Naive thymus-derived CD4-positive, alpha-beta T cell (primary cell): ENCODE measurements at regions of chr12 and their contacts with region 1.

Region 1: GRCh38 chr12:51238510-51239334 is at the start of gene DAZAP2:
- DNase-seq: peak; percentile 82 to 94 (median 92)
- ATAC-seq: peak; percentile 93
- H3K4me3 ChIP-seq: peak within 1 kb of the TSS; percentile 98
- H3K4me3 Mint-ChIP-seq: peak within 1 kb of the TSS; percentile 91 to 99 (median 97)
- H3K27ac ChIP-seq: peak within 1 kb of the TSS; percentile 100
- H3K27ac Mint-ChIP-seq: peak within 1 kb of the TSS; percentile 97 to 100 (median 100)
- H3K4me1 ChIP-seq: peaks cover 24 to 29% of the 10 kb centered on the region in 2 donors
- H3K4me1 Mint-ChIP-seq: peaks cover 36 to 50% (median 42%) of the 10 kb centered on the region in 7 donors
- H3K27me3 ChIP-seq: no peaks in the 10 kb centered on the region
- H3K27me3 Mint-ChIP-seq: peaks cover 0 to 4% (median 0%) of the 10 kb centered on the region in 5 donors
- total RNA-seq, gene DAZAP2: 231 to 306 (median 271) TPM

Region 2: GRCh38 chr12:50401365-50402081 is 837.2 kb before region 1 on chr12:
- CTCF ChIA-PET with region 1: no interaction called
- POLR2A ChIA-PET with region 1: no interaction called
- intact Hi-C with region 1: no loop called
- DNase-seq: peak in 2 of 9 donors; percentile 0 to 1
- ATAC-seq: no peak
- H3K4me3 ChIP-seq: peak overlapping the region; percentile 66
- H3K4me3 Mint-ChIP-seq: peak overlapping the region; percentile 81 to 100 (median 99)
- H3K27ac ChIP-seq: peak overlapping the region; percentile 77
- H3K27ac Mint-ChIP-seq: peak overlapping the region; percentile 86 to 97 (median 95)
- H3K4me1 ChIP-seq: peaks cover 9 to 12% of the 10 kb centered on the region in 2 donors
- H3K4me1 Mint-ChIP-seq: peaks cover 23 to 55% (median 37%) of the 10 kb centered on the region in 7 donors
- H3K27me3 ChIP-seq: no peaks in the 10 kb centered on the region
- H3K27me3 Mint-ChIP-seq: peaks cover 0 to 10% (median 1%) of the 10 kb centered on the region in 5 donors

Region 3: DNA sequence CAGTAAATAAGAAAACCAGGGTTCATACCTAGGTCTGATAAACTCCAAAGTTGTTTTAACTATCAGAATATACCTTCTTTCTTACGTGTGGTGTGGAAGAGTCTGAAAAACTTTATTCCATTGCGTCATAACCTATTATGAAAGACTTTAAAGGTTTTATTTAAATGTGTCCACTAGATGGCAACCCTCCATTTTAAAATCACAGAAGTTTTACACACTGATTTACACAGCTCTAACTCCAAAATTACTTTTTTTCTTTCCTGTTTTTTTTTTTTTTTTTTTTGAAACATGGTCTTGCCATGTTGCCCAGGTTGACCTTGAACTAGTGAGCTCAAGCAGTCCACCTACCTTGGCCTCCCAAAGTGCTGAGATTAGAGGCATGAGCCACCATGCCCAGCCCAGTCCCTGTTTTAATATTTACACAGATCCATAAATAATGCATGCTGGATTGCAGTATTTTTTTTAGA is 413.3 kb before region 1 on chr12:
- CTCF ChIA-PET with region 1: no interaction called
- POLR2A ChIA-PET with region 1: no interaction called
- intact Hi-C with region 1: loop called in 1 of 2 experiments (anchors 2 kb)
- DNase-seq: peak in 7 of 9 donors; percentile 45 to 76 (median 69)
- ATAC-seq: peak; percentile 91
- H3K4me3 ChIP-seq: no peak overlapping the region
- H3K4me3 Mint-ChIP-seq: peak overlapping the region in 2 of 10 donors; percentile 34 to 77
- H3K27ac ChIP-seq: peak overlapping the region; percentile 73
- H3K27ac Mint-ChIP-seq: peak overlapping the region; percentile 56 to 99 (median 91)
- H3K4me1 ChIP-seq: peaks cover 0 to 4% of the 10 kb centered on the region in 2 donors
- H3K4me1 Mint-ChIP-seq: peaks cover 0 to 9% (median 6%) of the 10 kb centered on the region in 7 donors
- H3K27me3 ChIP-seq: no peaks in the 10 kb centered on the region
- H3K27me3 Mint-ChIP-seq: no peaks in the 10 kb centered on the region

Region 4: GRCh38 chr12:50862316-50862715 is 376.4 kb before region 1 on chr12:
- CTCF ChIA-PET with region 1: no interaction called
- POLR2A ChIA-PET with region 1: no interaction called
- intact Hi-C with region 1: no loop called
- DNase-seq: no peak
- ATAC-seq: no peak
- H3K4me3 ChIP-seq: no peak overlapping the region
- H3K4me3 Mint-ChIP-seq: no peak overlapping the region
- H3K27ac ChIP-seq: no peak overlapping the region
- H3K27ac Mint-ChIP-seq: no peak overlapping the region
- H3K4me1 ChIP-seq: peaks cover 0 to 5% of the 10 kb centered on the region in 2 donors
- H3K4me1 Mint-ChIP-seq: peaks cover 8 to 22% (median 17%) of the 10 kb centered on the region in 7 donors
- H3K27me3 ChIP-seq: no peaks in the 10 kb centered on the region
- H3K27me3 Mint-ChIP-seq: no peaks in the 10 kb centered on the region

Region 5: GRCh38 chr12:51083126-51083833 is 155.4 kb before region 1 on chr12 and contains the start of gene CSRNP2:
- CTCF ChIA-PET with region 1: no interaction called
- POLR2A ChIA-PET with region 1: interaction called, 29 read pairs
- intact Hi-C with region 1: loop called (anchors 1 kb)
- DNase-seq: peak; percentile 90 to 95 (median 94)
- ATAC-seq: peak; percentile 100
- H3K4me3 ChIP-seq: peak within 1 kb of the TSS; percentile 78
- H3K4me3 Mint-ChIP-seq: peak within 1 kb of the TSS; percentile 89 to 100 (median 96)
- H3K27ac ChIP-seq: peak within 1 kb of the TSS; percentile 97
- H3K27ac Mint-ChIP-seq: peak within 1 kb of the TSS; percentile 89 to 98 (median 93)
- H3K4me1 ChIP-seq: peaks cover 7% of the 10 kb centered on the region in 2 donors
- H3K4me1 Mint-ChIP-seq: peaks cover 22 to 46% (median 43%) of the 10 kb centered on the region in 7 donors
- H3K27me3 ChIP-seq: no peaks in the 10 kb centered on the region
- H3K27me3 Mint-ChIP-seq: no peaks in the 10 kb centered on the region
- total RNA-seq, gene CSRNP2: 20.0 to 38.7 (median 23.4) TPM

Region 6: GRCh38 chr12:51202718-51203117 is 36.0 kb before region 1 on chr12:
- CTCF ChIA-PET with region 1: no interaction called
- POLR2A ChIA-PET with region 1: interaction called, 4 read pairs
- intact Hi-C with region 1: loop called in 1 of 2 experiments (anchors 5 kb)
- DNase-seq: peak in 7 of 9 donors; percentile 28 to 67 (median 36)
- ATAC-seq: peak; percentile 66
- H3K4me3 ChIP-seq: no peak overlapping the region
- H3K4me3 Mint-ChIP-seq: peak overlapping the region in 8 of 10 donors; percentile 20 to 54 (median 29)
- H3K27ac ChIP-seq: peak overlapping the region; percentile 37
- H3K27ac Mint-ChIP-seq: peak overlapping the region; percentile 14 to 94 (median 88)
- H3K4me1 ChIP-seq: peaks cover 0 to 12% of the 10 kb centered on the region in 2 donors
- H3K4me1 Mint-ChIP-seq: peaks cover 0 to 36% (median 13%) of the 10 kb centered on the region in 7 donors
- H3K27me3 ChIP-seq: no peaks in the 10 kb centered on the region
- H3K27me3 Mint-ChIP-seq: no peaks in the 10 kb centered on the region

Region 7: DNA sequence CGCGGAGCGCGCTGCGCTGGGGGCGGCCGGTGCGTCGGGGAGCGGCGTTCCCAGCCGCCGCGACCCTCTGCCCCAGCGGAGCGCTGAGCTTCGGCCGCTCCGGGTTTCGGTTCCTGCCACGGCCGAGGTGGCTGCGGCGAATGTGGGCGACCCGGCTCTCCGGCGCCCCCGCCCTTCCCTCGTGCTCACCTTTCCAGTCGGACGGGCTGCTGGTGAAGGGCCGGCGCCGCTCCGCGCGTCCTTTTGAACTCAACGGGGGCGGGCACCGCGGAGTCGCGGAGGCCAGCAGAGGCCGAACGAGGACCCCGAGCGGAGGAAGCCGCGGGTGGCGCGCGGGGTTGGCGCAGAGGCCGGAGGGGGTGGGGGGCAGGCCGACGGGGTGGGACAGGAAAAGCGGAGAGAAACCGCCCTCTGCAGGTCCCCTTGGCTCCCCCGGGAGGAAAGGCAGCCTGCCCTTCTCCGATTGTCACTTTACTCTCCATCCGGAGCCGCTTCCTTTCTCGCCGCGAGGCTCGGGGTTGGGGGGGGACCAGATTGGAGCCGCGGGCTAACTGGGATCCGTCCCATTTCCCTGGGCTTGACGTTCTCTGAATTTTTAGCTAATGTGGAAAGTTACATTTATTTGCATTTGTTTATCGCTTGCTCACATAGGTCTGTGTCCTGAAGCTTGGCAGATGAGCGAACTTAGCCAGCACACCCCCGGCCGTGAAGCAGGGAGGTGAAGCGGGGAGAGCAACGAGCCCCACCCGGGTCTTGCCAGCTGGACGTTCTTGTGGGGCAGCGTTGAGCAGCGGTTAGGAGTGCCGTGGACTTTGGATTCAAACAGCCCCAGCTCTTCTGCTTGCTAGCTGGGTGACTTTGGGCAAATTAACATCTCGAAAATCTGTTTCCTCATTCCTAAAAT is 31.6 kb after region 1 on chr12 and contains the start of gene SMAGP:
- CTCF ChIA-PET with region 1: no interaction called
- POLR2A ChIA-PET with region 1: interaction called, 3 read pairs
- intact Hi-C with region 1: loop called in 1 of 2 experiments (anchors 2 kb)
- DNase-seq: peak; percentile 13 to 62 (median 36)
- ATAC-seq: peak; percentile 68
- H3K4me3 ChIP-seq: peak within 1 kb of the TSS; percentile 57
- H3K4me3 Mint-ChIP-seq: peak within 1 kb of the TSS; percentile 90 to 98 (median 94)
- H3K27ac ChIP-seq: peak within 1 kb of the TSS; percentile 62
- H3K27ac Mint-ChIP-seq: peak within 1 kb of the TSS; percentile 55 to 96 (median 90)
- H3K4me1 ChIP-seq: peaks cover 5 to 20% of the 10 kb centered on the region in 2 donors
- H3K4me1 Mint-ChIP-seq: peaks cover 19 to 29% (median 24%) of the 10 kb centered on the region in 7 donors
- H3K27me3 ChIP-seq: no peaks in the 10 kb centered on the region
- H3K27me3 Mint-ChIP-seq: peaks cover 0 to 34% (median 0%) of the 10 kb centered on the region in 5 donors
- total RNA-seq, gene SMAGP: 1.5 to 7.4 (median 4.2) TPM